CD8-positive, alpha-beta memory T cell (primary cell): ENCODE measurements at regions of chr5 and their contacts with region 1.

Region 1: GRCh38 chr5:171913987-171914273 is 92.5 kb downstream of the FBXW11 start:
- DNase-seq: no peak
- H3K4me3 ChIP-seq: no peak overlapping the region
- H3K4me3 Mint-ChIP-seq: no peak overlapping the region
- H3K27ac ChIP-seq: no peak overlapping the region
- H3K27ac Mint-ChIP-seq: peak overlapping the region in 4 of 8 donors; percentile 30 to 73 (median 52)
- H3K4me1 ChIP-seq: peaks cover 11% of the 10 kb centered on the region
- H3K4me1 Mint-ChIP-seq: peaks cover 44 to 60% (median 57%) of the 10 kb centered on the region in 3 donors
- H3K27me3 ChIP-seq: no peaks in the 10 kb centered on the region
- H3K27me3 Mint-ChIP-seq: no peaks in the 10 kb centered on the region

Region 2: GRCh38 chr5:171893290-171893886 is 20.5 kb before region 1 on chr5:
- CTCF ChIA-PET with region 1: interaction called, 3 read pairs
- POLR2A ChIA-PET with region 1: interaction called, 11 read pairs
- DNase-seq: no peak
- H3K4me3 ChIP-seq: no peak overlapping the region
- H3K4me3 Mint-ChIP-seq: no peak overlapping the region
- H3K27ac ChIP-seq: no peak overlapping the region
- H3K27ac Mint-ChIP-seq: peak overlapping the region in 3 of 8 donors; percentile 3 to 26 (median 23)
- H3K4me1 ChIP-seq: no peaks in the 10 kb centered on the region
- H3K4me1 Mint-ChIP-seq: peaks cover 6 to 21% (median 17%) of the 10 kb centered on the region in 3 donors
- H3K27me3 ChIP-seq: no peaks in the 10 kb centered on the region
- H3K27me3 Mint-ChIP-seq: no peaks in the 10 kb centered on the region

Region 3: GRCh38 chr5:172059661-172060100 is 145.8 kb after region 1 on chr5:
- CTCF ChIA-PET with region 1: interaction called, 12 read pairs
- POLR2A ChIA-PET with region 1: no interaction called
- DNase-seq: peak in 1 of 5 donors; percentile 25
- H3K4me3 ChIP-seq: no peak overlapping the region
- H3K4me3 Mint-ChIP-seq: peak overlapping the region in 1 of 7 donors; percentile 5
- H3K27ac ChIP-seq: no peak overlapping the region
- H3K27ac Mint-ChIP-seq: peak overlapping the region in 7 of 8 donors; percentile 43 to 83 (median 59)
- H3K4me1 ChIP-seq: peaks cover 4% of the 10 kb centered on the region
- H3K4me1 Mint-ChIP-seq: peaks cover 16 to 20% (median 18%) of the 10 kb centered on the region in 3 donors
- H3K27me3 ChIP-seq: no peaks in the 10 kb centered on the region
- H3K27me3 Mint-ChIP-seq: peaks cover 0 to 4% of the 10 kb centered on the region in 2 donors